ENCODE measurements at regions of chr6 and their contacts with region 1.

Region 1: GRCh38 chr6:13614926-13615798 is at the start of gene NOL7:
- DNase-seq: peak; percentile 94 to 100 (median 98)
- ATAC-seq: peak; percentile 91 to 94 (median 93)
- H3K4me3 ChIP-seq: peak within 1 kb of the TSS; percentile 75 to 88
- H3K4me3 Mint-ChIP-seq: peak within 1 kb of the TSS; percentile 91 to 99 (median 91)
- H3K27ac ChIP-seq: peak within 1 kb of the TSS; percentile 75
- H3K27ac Mint-ChIP-seq: peak within 1 kb of the TSS; percentile 95 to 96
- H3K4me1 ChIP-seq: peaks cover 12 to 22% of the 10 kb centered on the region in 2 experiments
- H3K4me1 Mint-ChIP-seq: peaks cover 42 to 49% (median 45%) of the 10 kb centered on the region in 3 donors
- H3K27me3 ChIP-seq: no peaks in the 10 kb centered on the region
- H3K27me3 Mint-ChIP-seq: no peaks in the 10 kb centered on the region
- total RNA-seq, gene NOL7: 46.9 to 62.3 (median 59.3) TPM

Region 2: GRCh38 chr6:13261464-13261994 is 353.6 kb before region 1 on chr6:
- CTCF ChIA-PET with region 1: no interaction called
- POLR2A ChIA-PET with region 1: no interaction called
- DNase-seq: peak in 8 of 35 experiments; percentile 2 to 34 (median 10)
- ATAC-seq: peak in 3 of 4 experiments; percentile 52 to 61 (median 53)
- H3K4me3 ChIP-seq: no peak overlapping the region
- H3K4me3 Mint-ChIP-seq: no peak overlapping the region
- H3K27ac ChIP-seq: no peak overlapping the region
- H3K27ac Mint-ChIP-seq: peak overlapping the region in 1 of 2 donors; percentile 5
- H3K4me1 ChIP-seq: peaks cover 0 to 7% of the 10 kb centered on the region in 2 experiments
- H3K4me1 Mint-ChIP-seq: peaks cover 10 to 14% (median 13%) of the 10 kb centered on the region in 3 donors
- H3K27me3 ChIP-seq: peaks cover 0 to 4% of the 10 kb centered on the region in 2 experiments
- H3K27me3 Mint-ChIP-seq: no peaks in the 10 kb centered on the region

Region 3: DNA sequence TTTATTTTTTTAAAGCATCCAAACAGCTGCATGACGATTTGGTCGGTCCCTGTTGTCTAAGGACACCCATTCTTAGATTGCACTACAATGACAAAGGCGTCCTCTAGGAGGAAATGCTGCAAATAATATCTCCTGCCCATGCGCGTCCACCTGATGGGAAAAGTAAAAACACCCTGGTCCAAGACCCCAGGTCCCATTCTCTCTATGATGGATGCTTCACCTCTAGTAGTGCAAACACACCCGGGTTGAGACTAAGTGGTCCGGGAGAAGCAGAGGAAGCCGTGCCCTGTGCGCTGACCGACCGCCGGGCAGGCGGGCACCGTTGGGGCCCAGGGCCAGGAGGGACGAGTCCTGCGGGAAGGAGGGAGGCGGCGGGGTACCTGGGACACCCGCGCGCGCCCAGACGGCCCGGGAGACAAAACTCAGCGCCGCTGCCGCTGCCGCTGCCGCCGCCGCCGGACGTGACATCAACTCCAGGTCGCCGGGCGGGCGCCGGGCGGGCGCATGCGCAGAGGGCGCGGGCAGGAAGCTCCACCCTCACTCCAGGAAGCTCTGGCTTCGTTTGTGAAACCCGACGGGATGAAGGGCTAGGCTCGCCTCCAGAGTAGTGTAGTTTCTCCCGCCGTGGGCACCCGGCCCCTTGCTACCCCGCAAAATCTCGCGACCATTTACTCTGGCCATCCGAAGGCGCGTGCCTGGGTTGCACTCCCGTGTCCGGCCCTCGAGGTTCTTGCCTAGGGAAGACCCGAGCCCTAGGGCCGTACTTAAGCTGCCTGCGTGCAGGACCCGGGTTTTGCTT is 286.9 kb before region 1 on chr6 and contains the start of gene TBC1D7:
- CTCF ChIA-PET with region 1: interaction called in 1 of 2 experiments, 4 read pairs
- POLR2A ChIA-PET with region 1: interaction called in 1 of 2 experiments, 10 read pairs
- DNase-seq: peak; percentile 82 to 97 (median 90)
- ATAC-seq: peak; percentile 90 to 92 (median 92)
- H3K4me3 ChIP-seq: peak within 1 kb of the TSS; percentile 85 to 98
- H3K4me3 Mint-ChIP-seq: peak within 1 kb of the TSS; percentile 86 to 93 (median 92)
- H3K27ac ChIP-seq: peak within 1 kb of the TSS; percentile 94
- H3K27ac Mint-ChIP-seq: peak within 1 kb of the TSS; percentile 96 to 99
- H3K4me1 ChIP-seq: peaks cover 7 to 9% of the 10 kb centered on the region in 2 experiments
- H3K4me1 Mint-ChIP-seq: peaks cover 20 to 33% (median 29%) of the 10 kb centered on the region in 3 donors
- H3K27me3 ChIP-seq: no peaks in the 10 kb centered on the region
- H3K27me3 Mint-ChIP-seq: no peaks in the 10 kb centered on the region
- total RNA-seq, gene TBC1D7: 12.7 to 16.2 (median 14.6) TPM

Region 4: GRCh38 chr6:13427801-13428582 is 187.2 kb before region 1 on chr6:
- CTCF ChIA-PET with region 1: no interaction called
- POLR2A ChIA-PET with region 1: no interaction called
- DNase-seq: peak; percentile 33 to 80 (median 65)
- ATAC-seq: peak; percentile 81 to 87 (median 82)
- H3K4me3 ChIP-seq: peak overlapping the region; percentile 9 to 49
- H3K4me3 Mint-ChIP-seq: peak overlapping the region; percentile 60 to 78 (median 62)
- H3K27ac ChIP-seq: peak overlapping the region; percentile 82
- H3K27ac Mint-ChIP-seq: peak overlapping the region; percentile 81 to 82
- H3K4me1 ChIP-seq: peaks cover 12 to 76% of the 10 kb centered on the region in 2 experiments
- H3K4me1 Mint-ChIP-seq: peaks cover 43 to 62% (median 54%) of the 10 kb centered on the region in 3 donors
- H3K27me3 ChIP-seq: no peaks in the 10 kb centered on the region
- H3K27me3 Mint-ChIP-seq: no peaks in the 10 kb centered on the region

Region 5: GRCh38 chr6:13486679-13487121 is 128.5 kb before region 1 on chr6:
- CTCF ChIA-PET with region 1: no interaction called
- POLR2A ChIA-PET with region 1: no interaction called
- DNase-seq: peak in 32 of 35 experiments; percentile 21 to 68 (median 39)
- ATAC-seq: peak; percentile 42 to 54 (median 48)
- H3K4me3 ChIP-seq: peak overlapping the region; percentile 61 to 81
- H3K4me3 Mint-ChIP-seq: peak overlapping the region; percentile 85 to 94 (median 88)
- H3K27ac ChIP-seq: no peak overlapping the region
- H3K27ac Mint-ChIP-seq: peak overlapping the region in 1 of 2 donors; percentile 73
- H3K4me1 ChIP-seq: peaks cover 12 to 37% of the 10 kb centered on the region in 2 experiments
- H3K4me1 Mint-ChIP-seq: peaks cover 27 to 39% (median 32%) of the 10 kb centered on the region in 3 donors
- H3K27me3 ChIP-seq: peaks cover 0 to 19% of the 10 kb centered on the region in 2 experiments
- H3K27me3 Mint-ChIP-seq: peaks cover 10 to 17% of the 10 kb centered on the region in 2 donors

Region 6: DNA sequence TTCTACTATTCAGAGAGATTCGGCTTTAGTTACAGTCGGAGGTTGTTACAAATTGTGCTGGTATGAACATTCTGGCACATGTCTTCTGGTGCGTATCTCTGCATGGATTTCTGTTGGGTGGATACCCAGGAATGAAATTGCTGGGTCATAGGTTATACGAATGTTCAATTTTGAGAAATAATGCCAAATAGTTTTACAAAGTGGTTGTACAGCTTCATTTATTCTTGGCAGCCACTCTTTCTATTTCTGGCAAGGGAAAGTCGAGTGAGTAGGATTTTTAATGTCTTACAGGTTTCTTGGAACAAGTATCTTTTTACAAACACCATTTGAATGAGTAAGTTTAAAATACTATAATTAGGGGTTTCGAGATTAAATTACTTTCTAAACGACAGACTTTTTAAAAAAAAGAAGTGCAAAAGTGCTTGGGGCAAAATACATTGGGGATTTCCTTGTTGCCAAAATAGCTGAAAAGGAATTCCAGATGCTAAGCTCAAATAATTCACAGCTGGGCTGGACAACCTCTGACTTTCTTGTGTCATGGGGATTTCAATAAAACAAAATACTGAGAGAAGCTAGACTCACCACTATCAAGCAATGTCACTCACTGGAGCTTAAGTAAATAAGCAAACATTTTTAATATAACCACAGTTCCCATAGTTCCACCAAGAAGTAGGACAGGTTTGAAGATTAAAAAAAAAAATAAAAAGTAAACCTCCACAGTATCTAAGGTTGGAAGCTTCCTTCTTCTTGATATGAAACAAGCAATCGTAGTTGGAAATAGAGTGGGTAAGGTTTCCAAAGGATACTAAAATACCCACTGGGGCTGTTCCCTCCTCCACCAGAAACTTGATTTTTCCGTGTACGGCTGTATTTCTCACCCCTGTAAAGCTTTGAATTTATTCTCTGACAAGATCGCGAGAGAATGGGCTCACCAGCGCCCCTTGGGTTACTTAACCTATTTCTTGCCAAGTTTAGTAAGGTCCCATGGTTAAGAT is 106.2 kb before region 1 on chr6:
- CTCF ChIA-PET with region 1: no interaction called
- POLR2A ChIA-PET with region 1: no interaction called
- DNase-seq: no peak
- ATAC-seq: no peak
- H3K4me3 ChIP-seq: no peak overlapping the region
- H3K4me3 Mint-ChIP-seq: no peak overlapping the region
- H3K27ac ChIP-seq: no peak overlapping the region
- H3K27ac Mint-ChIP-seq: no peak overlapping the region
- H3K4me1 ChIP-seq: no peaks in the 10 kb centered on the region
- H3K4me1 Mint-ChIP-seq: no peaks in the 10 kb centered on the region
- H3K27me3 ChIP-seq: peaks cover 0 to 3% of the 10 kb centered on the region in 2 experiments
- H3K27me3 Mint-ChIP-seq: peaks cover 2 to 13% of the 10 kb centered on the region in 2 donors

Region 7: GRCh38 chr6:13711733-13712598 is 96.8 kb after region 1 on chr6 and contains the start of gene RANBP9:
- CTCF ChIA-PET with region 1: interaction called in 1 of 2 experiments, 17 read pairs
- POLR2A ChIA-PET with region 1: interaction called in 1 of 2 experiments, 3 read pairs
- DNase-seq: peak; percentile 78 to 94 (median 85)
- ATAC-seq: peak; percentile 85 to 91 (median 87)
- H3K4me3 ChIP-seq: peak within 1 kb of the TSS; percentile 86
- H3K4me3 Mint-ChIP-seq: peak within 1 kb of the TSS; percentile 87 to 95 (median 94)
- H3K27ac ChIP-seq: peak within 1 kb of the TSS; percentile 92
- H3K27ac Mint-ChIP-seq: peak within 1 kb of the TSS; percentile 92 to 96
- H3K4me1 ChIP-seq: peaks cover 20 to 21% of the 10 kb centered on the region in 2 experiments
- H3K4me1 Mint-ChIP-seq: peaks cover 48 to 58% (median 55%) of the 10 kb centered on the region in 3 donors
- H3K27me3 ChIP-seq: no peaks in the 10 kb centered on the region
- H3K27me3 Mint-ChIP-seq: no peaks in the 10 kb centered on the region
- total RNA-seq, gene RANBP9: 44.9 to 59.4 (median 46.8) TPM

Measured in T-cell (primary cell).